ENCODE measurements at regions of chr12 and their contacts with region 1.

Region 1: DNA sequence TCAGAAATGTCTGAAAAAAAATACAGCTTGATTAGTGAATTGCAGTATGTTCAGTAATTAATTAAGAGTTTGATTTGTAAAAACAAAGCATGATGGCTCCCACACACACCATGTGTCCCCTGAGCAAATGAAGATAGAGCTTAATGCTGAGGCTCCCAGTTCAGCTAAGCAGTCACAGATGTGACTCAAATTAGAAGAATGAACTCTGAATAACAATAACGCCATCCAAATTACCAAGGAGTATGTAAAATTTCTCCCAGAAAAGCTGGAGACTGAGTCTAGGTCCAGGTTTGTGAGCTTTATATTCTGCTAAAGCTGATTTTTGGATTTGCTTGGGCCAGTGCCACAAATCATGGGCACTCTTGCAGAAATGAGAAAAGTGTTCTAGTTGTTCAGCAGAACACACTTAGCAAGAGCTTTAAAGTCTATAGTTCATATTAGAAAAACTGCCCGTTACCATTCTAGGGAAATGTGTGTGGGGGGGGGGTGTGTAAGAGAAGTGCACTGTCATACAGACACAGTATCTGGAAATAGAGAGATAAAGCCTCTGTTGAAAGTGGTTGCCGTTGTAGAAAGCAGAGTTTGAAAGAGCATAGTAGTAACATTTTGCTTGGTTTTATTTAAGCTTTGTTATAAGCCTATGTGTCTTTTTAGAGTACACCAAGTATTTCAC is 253.1 kb downstream of the BCAT1 start:
- DNase-seq: no peak
- ATAC-seq: no peak
- H3K4me3 ChIP-seq: no peak overlapping the region
- H3K4me3 Mint-ChIP-seq: no peak overlapping the region
- H3K27ac ChIP-seq: no peak overlapping the region
- H3K27ac Mint-ChIP-seq: no peak overlapping the region
- H3K4me1 ChIP-seq: no peaks in the 10 kb centered on the region
- H3K4me1 Mint-ChIP-seq: no peaks in the 10 kb centered on the region
- H3K27me3 ChIP-seq: no peaks in the 10 kb centered on the region
- H3K27me3 Mint-ChIP-seq: no peaks in the 10 kb centered on the region
- CTCF ChIP-seq: no peak

Region 2: DNA sequence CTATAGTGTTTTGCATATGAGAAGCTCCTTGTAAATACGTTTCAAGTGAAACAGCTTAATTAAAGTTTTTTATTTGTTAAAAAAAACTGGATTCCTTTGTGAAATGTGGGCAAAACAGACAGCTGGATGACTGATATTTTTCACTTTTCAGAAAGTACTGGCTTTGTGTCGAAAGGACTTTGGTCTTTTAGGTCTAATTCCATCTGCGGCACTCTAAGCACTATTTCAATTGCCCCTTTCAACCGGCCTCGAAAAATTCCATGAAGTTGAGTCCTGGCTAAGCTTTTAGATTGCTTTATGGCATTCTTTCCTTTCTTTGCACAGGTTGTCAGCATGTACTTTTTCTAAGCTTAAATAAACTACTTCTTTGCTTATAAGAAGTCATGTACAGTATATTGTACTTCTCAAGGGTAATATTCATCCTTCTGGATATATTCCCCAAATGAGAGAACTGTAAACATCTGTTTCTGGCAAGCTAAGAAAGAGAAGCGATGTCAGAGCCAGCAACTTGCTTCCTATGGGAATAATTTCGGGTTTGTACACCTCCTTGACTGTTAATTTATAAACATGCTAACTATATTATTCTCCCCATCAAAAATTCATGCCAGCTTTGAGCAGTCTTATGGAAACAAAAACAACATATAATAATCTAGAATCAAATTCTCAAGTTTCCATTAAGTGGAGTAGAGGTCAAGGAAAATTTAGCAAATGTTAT is 1459.6 kb before region 1 on chr12:
- CTCF ChIA-PET with region 1: no interaction called
- POLR2A ChIA-PET with region 1: no interaction called
- intact Hi-C with region 1: loop called in 1 of 2 experiments (anchors 10 kb)
- DNase-seq: no peak
- ATAC-seq: no peak
- H3K4me3 ChIP-seq: no peak overlapping the region
- H3K4me3 Mint-ChIP-seq: no peak overlapping the region
- H3K27ac ChIP-seq: no peak overlapping the region
- H3K27ac Mint-ChIP-seq: no peak overlapping the region
- H3K4me1 ChIP-seq: no peaks in the 10 kb centered on the region
- H3K4me1 Mint-ChIP-seq: no peaks in the 10 kb centered on the region
- H3K27me3 ChIP-seq: no peaks in the 10 kb centered on the region
- H3K27me3 Mint-ChIP-seq: no peaks in the 10 kb centered on the region
- CTCF ChIP-seq: no peak

Region 3: GRCh38 chr12:24596768-24597388 is 98.9 kb before region 1 on chr12:
- CTCF ChIA-PET with region 1: no interaction called
- POLR2A ChIA-PET with region 1: no interaction called
- intact Hi-C with region 1: no loop called
- DNase-seq: no peak
- ATAC-seq: no peak
- H3K4me3 ChIP-seq: no peak overlapping the region
- H3K4me3 Mint-ChIP-seq: no peak overlapping the region
- H3K27ac ChIP-seq: no peak overlapping the region
- H3K27ac Mint-ChIP-seq: no peak overlapping the region
- H3K4me1 ChIP-seq: no peaks in the 10 kb centered on the region
- H3K4me1 Mint-ChIP-seq: no peaks in the 10 kb centered on the region
- H3K27me3 ChIP-seq: no peaks in the 10 kb centered on the region
- H3K27me3 Mint-ChIP-seq: no peaks in the 10 kb centered on the region
- CTCF ChIP-seq: no peak

Region 4: GRCh38 chr12:24661657-24662098 is 34.1 kb before region 1 on chr12:
- CTCF ChIA-PET with region 1: no interaction called
- POLR2A ChIA-PET with region 1: no interaction called
- intact Hi-C with region 1: no loop called
- DNase-seq: peak in 3 of 14 experiments; percentile 1 to 59 (median 45)
- ATAC-seq: no peak
- H3K4me3 ChIP-seq: no peak overlapping the region
- H3K4me3 Mint-ChIP-seq: no peak overlapping the region
- H3K27ac ChIP-seq: no peak overlapping the region
- H3K27ac Mint-ChIP-seq: no peak overlapping the region
- H3K4me1 ChIP-seq: no peaks in the 10 kb centered on the region
- H3K4me1 Mint-ChIP-seq: no peaks in the 10 kb centered on the region
- H3K27me3 ChIP-seq: no peaks in the 10 kb centered on the region
- H3K27me3 Mint-ChIP-seq: no peaks in the 10 kb centered on the region
- CTCF ChIP-seq: no peak

Region 5: GRCh38 chr12:25491396-25492325 is 795.9 kb after region 1 on chr12:
- CTCF ChIA-PET with region 1: no interaction called
- POLR2A ChIA-PET with region 1: no interaction called
- intact Hi-C with region 1: loop called in 1 of 2 experiments (anchors 5 kb)
- DNase-seq: no peak
- ATAC-seq: no peak
- H3K4me3 ChIP-seq: no peak overlapping the region
- H3K4me3 Mint-ChIP-seq: no peak overlapping the region
- H3K27ac ChIP-seq: no peak overlapping the region
- H3K27ac Mint-ChIP-seq: no peak overlapping the region
- H3K4me1 ChIP-seq: no peaks in the 10 kb centered on the region
- H3K4me1 Mint-ChIP-seq: peaks cover 12% of the 10 kb centered on the region
- H3K27me3 ChIP-seq: no peaks in the 10 kb centered on the region
- H3K27me3 Mint-ChIP-seq: peaks cover 4% of the 10 kb centered on the region
- CTCF ChIP-seq: no peak